Activated CD8-positive, alpha-beta T cell treated with anti-CD3 and anti-CD28 coated beads for 36 hours (primary cell): ENCODE measurements at regions of chr14 and their contacts with region 1.

Region 1: GRCh38 chr14:22519877-22520685 is 68.9 kb downstream of the DAD1 start:
- DNase-seq: no peak
- ATAC-seq: peak; percentile 14
- H3K4me3 Mint-ChIP-seq: peak overlapping the region; percentile 79
- H3K27ac Mint-ChIP-seq: peak overlapping the region; percentile 96
- H3K4me1 Mint-ChIP-seq: peaks cover 68% of the 10 kb centered on the region
- H3K27me3 Mint-ChIP-seq: no peaks in the 10 kb centered on the region
- CTCF ChIP-seq: no peak

Region 2: DNA sequence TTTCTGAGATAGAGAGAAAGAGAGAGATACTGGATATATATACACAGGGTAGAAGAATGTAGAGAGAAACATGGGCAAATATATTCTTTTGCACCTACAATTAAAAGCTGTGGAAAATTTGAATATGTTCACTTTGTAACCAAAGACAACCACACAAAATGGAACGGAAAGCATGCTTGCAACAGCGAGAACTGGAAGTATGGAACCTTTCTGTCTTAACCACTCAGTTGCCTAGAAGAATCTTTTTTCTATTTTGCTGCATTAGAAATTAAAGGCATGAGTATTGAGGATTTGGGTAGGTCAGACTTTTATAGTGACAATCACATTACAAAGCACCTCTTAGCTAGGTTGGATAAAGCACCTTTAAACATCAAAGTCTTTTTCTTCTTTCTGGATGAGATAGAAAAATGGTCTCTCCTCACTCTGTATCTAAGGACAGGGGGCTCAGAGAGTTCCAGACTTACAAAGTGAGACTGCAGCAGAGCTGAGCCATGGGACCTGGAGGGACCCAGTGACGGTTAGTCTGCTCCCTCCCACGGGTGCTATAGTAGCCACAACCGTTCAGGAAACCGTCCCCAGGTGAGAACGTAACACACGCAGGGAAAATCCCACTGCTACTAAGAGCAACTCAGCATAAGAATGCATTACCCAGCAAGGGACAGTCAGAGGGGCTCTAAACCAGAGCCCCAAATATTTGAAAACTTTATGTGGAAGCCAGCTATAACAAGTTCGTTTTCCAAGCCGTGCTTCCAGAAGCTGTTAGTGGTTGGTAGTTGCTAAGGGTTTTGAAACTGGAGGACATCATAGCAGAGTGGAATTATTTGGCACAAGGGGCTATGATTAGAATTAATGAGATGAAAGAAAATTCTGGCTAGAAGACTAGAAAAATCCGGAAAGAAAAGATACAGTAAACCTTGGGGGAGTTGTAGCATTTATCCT is 28.1 kb before region 1 on chr14:
- CTCF ChIA-PET with region 1: no interaction called
- POLR2A ChIA-PET with region 1: interaction called, 1,006 read pairs
- intact Hi-C with region 1: no loop called
- DNase-seq: peak; percentile 58
- ATAC-seq: peak; percentile 52
- H3K4me3 Mint-ChIP-seq: peak overlapping the region; percentile 82
- H3K27ac Mint-ChIP-seq: peak overlapping the region; percentile 92
- H3K4me1 Mint-ChIP-seq: peaks cover 3% of the 10 kb centered on the region
- H3K27me3 Mint-ChIP-seq: no peaks in the 10 kb centered on the region
- CTCF ChIP-seq: no peak

Region 3: GRCh38 chr14:22536853-22537338 is 16.8 kb after region 1 on chr14:
- CTCF ChIA-PET with region 1: interaction called, 10 read pairs
- POLR2A ChIA-PET with region 1: interaction called, 1,006 read pairs
- intact Hi-C with region 1: no loop called
- DNase-seq: peak; percentile 96
- ATAC-seq: peak; percentile 86
- H3K4me3 Mint-ChIP-seq: peak overlapping the region; percentile 79
- H3K27ac Mint-ChIP-seq: peak overlapping the region; percentile 94
- H3K4me1 Mint-ChIP-seq: peaks cover 88% of the 10 kb centered on the region
- H3K27me3 Mint-ChIP-seq: no peaks in the 10 kb centered on the region
- CTCF ChIP-seq: no peak

Region 4: DNA sequence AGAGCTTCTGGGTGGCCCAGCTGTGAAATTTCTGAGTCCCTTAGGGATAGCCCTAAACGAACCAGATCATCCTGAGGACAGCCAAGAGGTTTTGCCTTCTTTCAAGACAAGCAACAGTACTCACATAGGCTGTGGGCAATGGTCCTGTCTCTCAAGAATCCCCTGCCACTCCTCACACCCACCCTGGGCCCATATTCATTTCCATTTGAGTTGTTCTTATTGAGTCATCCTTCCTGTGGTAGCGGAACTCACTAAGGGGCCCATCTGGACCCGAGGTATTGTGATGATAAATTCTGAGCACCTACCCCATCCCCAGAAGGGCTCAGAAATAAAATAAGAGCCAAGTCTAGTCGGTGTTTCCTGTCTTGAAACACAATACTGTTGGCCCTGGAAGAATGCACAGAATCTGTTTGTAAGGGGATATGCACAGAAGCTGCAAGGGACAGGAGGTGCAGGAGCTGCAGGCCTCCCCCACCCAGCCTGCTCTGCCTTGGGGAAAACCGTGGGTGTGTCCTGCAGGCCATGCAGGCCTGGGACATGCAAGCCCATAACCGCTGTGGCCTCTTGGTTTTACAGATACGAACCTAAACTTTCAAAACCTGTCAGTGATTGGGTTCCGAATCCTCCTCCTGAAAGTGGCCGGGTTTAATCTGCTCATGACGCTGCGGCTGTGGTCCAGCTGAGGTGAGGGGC is 30.0 kb after region 1 on chr14:
- CTCF ChIA-PET with region 1: interaction called, 17 read pairs
- POLR2A ChIA-PET with region 1: interaction called, 575 read pairs
- intact Hi-C with region 1: loop called (anchors 5 kb)
- DNase-seq: peak; percentile 90
- ATAC-seq: peak; percentile 57
- H3K4me3 Mint-ChIP-seq: peak overlapping the region; percentile 79
- H3K27ac Mint-ChIP-seq: peak overlapping the region; percentile 94
- H3K4me1 Mint-ChIP-seq: peaks cover 92% of the 10 kb centered on the region
- H3K27me3 Mint-ChIP-seq: no peaks in the 10 kb centered on the region
- CTCF ChIP-seq: no peak